ENCODE measurements at regions of chr13 and their contacts with region 1.

Region 1: DNA sequence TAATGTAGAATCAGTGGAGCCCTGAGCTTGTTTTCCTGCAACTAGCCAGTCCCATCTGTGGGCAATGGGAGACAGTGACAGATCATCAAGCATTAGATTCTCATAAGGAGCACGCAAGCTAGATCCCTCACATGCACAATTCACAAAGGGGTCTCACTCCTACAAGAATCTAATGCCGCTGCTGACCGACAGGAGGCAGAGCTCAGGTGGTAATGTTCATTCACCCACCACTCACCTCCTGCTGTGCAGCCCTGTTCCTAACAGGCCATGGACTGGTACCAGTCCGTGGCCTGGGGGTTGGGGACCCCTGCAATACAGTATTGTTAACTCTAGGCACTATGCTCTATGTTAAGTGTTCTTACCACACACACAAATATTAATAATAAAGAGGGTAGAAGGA is 362.8 kb downstream of the RBM26 start:
- DNase-seq: no peak
- H3K4me3 ChIP-seq: no peak overlapping the region
- H3K27ac ChIP-seq: no peak overlapping the region
- H3K4me1 ChIP-seq: no peaks in the 10 kb centered on the region; a peak in 1 of 7 replicates
- H3K27me3 ChIP-seq: no peaks in the 10 kb centered on the region
- CTCF ChIP-seq: no peak
- EP300 ChIP-seq: no peak
- POLR2A ChIP-seq: no peak
- RAD21 ChIP-seq: no peak

Region 2: DNA sequence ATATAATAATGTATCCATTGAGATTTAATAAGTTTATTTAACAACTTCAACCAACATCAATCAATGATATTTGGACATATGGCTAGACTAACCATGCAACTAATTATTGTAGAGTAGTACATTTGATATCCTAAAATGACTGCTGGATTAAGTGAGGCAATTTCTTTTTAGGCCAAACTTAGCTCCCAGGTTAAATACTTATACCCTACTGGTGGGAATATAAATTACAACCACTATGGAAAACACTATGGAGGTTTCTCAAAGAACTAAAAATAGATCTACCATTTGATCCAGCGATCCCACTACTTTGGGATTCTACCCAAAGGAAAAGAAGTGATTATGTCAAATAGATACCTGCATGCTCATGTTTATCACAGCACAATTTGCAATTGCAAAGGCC is 17.0 kb after region 1 on chr13:
- CTCF ChIA-PET with region 1: interaction called, 12 read pairs
- POLR2A ChIA-PET with region 1: no interaction called
- DNase-seq: no peak
- H3K4me3 ChIP-seq: no peak overlapping the region
- H3K27ac ChIP-seq: no peak overlapping the region
- H3K4me1 ChIP-seq: peaks cover 0 to 3% (median 0%) of the 10 kb centered on the region in 4 experiments; a peak in 1 of 7 replicates
- H3K27me3 ChIP-seq: no peaks in the 10 kb centered on the region
- CTCF ChIP-seq: peak in 1 of 3 experiments; percentile 13; a peak in 1 of 4 replicates
- EP300 ChIP-seq: no peak
- POLR2A ChIP-seq: no peak
- RAD21 ChIP-seq: no peak

Measured in H1 (cell line).